K562 (cell line): ENCODE measurements at regions of chr1 and their contacts with region 1.

Region 1: DNA sequence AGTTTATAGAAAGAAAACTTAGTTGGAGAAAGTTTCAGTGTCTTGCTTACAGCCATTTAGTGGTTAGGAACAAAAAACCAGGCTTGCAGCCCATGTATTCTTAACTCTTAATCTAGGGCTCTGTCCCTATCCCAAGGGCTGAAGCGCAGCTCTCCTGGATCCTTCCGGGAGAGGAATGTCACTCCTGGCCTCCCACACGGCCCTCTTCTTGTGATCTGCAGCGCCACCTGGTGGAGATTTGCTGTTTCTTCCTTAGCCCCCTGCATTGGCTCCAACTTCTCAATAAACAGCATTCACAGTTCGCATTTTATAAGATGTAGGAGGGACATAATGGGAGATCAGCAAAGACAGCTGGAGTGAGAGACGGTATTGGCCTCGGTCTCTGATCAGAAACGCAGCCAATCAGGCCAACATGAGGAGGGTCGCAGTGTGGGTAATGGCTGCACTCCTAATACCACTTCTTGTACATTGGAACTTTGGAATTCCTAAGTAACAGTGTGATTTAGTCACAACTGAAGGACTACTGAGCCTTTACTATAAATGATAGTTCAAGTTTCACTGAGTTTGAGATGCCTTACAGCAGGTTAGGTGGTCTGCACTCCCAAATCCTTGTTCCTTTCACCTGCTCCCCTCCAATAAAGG is 283.4 kb downstream of the ASTN1 start:
- DNase-seq: peak; percentile 81 to 92 (median 91)
- ATAC-seq: peak; percentile 67
- H3K4me3 ChIP-seq: no peak overlapping the region
- H3K27ac ChIP-seq: peak overlapping the region; percentile 88
- H3K4me1 ChIP-seq: peaks cover 33 to 50% of the 10 kb centered on the region in 2 experiments
- H3K27me3 ChIP-seq: no peaks in the 10 kb centered on the region
- CTCF ChIP-seq: peak; percentile 86 to 96 (median 95)
- EP300 ChIP-seq: peak; percentile 25; the same call in 1 of the 2 replicates
- POLR2A ChIP-seq: no peak
- RAD21 ChIP-seq: peak; percentile 96 to 97

Region 2: GRCh38 chr1:176691251-176692228 is 189.5 kb before region 1 on chr1:
- CTCF ChIA-PET with region 1: interaction called, 3 read pairs
- POLR2A ChIA-PET with region 1: no interaction called
- in situ Hi-C with region 1: no loop called
- intact Hi-C with region 1: loop called (anchors 2 kb)
- DNase-seq: peak; percentile 35 to 76 (median 49)
- ATAC-seq: peak; percentile 91
- H3K4me3 ChIP-seq: no peak overlapping the region
- H3K27ac ChIP-seq: no peak overlapping the region
- H3K4me1 ChIP-seq: no peaks in the 10 kb centered on the region; a peak in 1 of 5 replicates
- H3K27me3 ChIP-seq: 0 out of 5 replicates have a peak, but pooled peaks cover 0 to 3% of the 10 kb centered on the region in 2 experiments
- CTCF ChIP-seq: peak; percentile 76 to 80 (median 80)
- EP300 ChIP-seq: no peak
- POLR2A ChIP-seq: no peak
- RAD21 ChIP-seq: peak; percentile 77 to 78

Region 3: DNA sequence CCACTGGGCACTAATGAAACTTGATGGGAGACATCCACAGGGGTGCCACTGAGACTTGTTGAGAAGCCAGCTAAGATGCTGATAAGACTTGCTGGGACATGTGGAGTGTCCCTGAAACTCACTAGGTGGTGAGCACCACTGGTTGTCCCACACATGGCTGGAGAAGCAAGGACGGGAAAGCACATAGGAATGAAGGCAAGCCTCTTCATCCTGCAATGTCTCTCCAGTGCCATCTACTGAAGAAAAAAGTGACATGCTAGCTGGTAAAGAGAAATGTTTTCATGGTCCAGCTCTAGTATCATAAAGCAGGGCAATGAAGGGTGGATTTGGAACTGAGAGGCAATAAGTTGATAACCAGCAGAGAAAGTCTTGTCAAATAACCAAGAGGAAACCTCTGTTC is 135.1 kb before region 1 on chr1:
- CTCF ChIA-PET with region 1: interaction called, 4 read pairs
- POLR2A ChIA-PET with region 1: no interaction called
- in situ Hi-C with region 1: no loop called
- intact Hi-C with region 1: loop called (anchors 1 kb)
- DNase-seq: peak in 1 of 4 experiments; percentile 21
- ATAC-seq: peak; percentile 77; the same call in 2 of the 3 replicates
- H3K4me3 ChIP-seq: no peak overlapping the region
- H3K27ac ChIP-seq: no peak overlapping the region
- H3K4me1 ChIP-seq: no peaks in the 10 kb centered on the region
- H3K27me3 ChIP-seq: peaks cover 0 to 3% of the 10 kb centered on the region in 2 experiments; a peak in 2 of 5 replicates
- CTCF ChIP-seq: peak; percentile 35 to 56 (median 53); a peak in 5 of 6 replicates
- EP300 ChIP-seq: no peak
- POLR2A ChIP-seq: no peak
- RAD21 ChIP-seq: peak; percentile 8 to 71; a peak in 3 of 4 replicates

Region 4: DNA sequence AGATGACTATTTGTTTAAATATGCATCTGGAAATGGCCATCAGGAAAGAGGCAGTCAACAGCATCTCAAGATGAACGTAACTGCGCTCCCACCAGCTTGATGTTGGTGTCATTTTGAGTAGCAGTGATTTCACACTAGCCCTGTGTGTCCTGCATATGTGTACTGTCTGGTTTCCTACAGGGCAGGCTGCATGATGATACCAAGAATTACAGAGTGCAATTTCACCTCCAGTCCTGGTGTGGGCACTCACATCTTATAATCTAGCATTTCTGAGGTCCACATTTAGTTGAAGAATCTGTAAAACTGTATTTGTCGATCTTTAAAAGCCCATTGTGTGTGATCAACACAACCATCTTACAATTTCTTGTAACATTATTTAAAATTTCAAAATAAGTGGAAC is 81.8 kb before region 1 on chr1:
- CTCF ChIA-PET with region 1: no interaction called
- POLR2A ChIA-PET with region 1: no interaction called
- in situ Hi-C with region 1: no loop called
- intact Hi-C with region 1: loop called (anchors 1 kb)
- DNase-seq: peak in 2 of 4 experiments; percentile 3 to 17
- ATAC-seq: peak; percentile 81
- H3K4me3 ChIP-seq: no peak overlapping the region
- H3K27ac ChIP-seq: no peak overlapping the region
- H3K4me1 ChIP-seq: no peaks in the 10 kb centered on the region
- H3K27me3 ChIP-seq: peaks cover 0 to 7% of the 10 kb centered on the region in 2 experiments; a peak in 1 of 5 replicates
- CTCF ChIP-seq: peak; percentile 10 to 42 (median 29); a peak in 3 of 6 replicates
- EP300 ChIP-seq: no peak
- POLR2A ChIP-seq: no peak
- RAD21 ChIP-seq: peak in 1 of 2 experiments; percentile 43; a peak in 2 of 4 replicates

Region 5: DNA sequence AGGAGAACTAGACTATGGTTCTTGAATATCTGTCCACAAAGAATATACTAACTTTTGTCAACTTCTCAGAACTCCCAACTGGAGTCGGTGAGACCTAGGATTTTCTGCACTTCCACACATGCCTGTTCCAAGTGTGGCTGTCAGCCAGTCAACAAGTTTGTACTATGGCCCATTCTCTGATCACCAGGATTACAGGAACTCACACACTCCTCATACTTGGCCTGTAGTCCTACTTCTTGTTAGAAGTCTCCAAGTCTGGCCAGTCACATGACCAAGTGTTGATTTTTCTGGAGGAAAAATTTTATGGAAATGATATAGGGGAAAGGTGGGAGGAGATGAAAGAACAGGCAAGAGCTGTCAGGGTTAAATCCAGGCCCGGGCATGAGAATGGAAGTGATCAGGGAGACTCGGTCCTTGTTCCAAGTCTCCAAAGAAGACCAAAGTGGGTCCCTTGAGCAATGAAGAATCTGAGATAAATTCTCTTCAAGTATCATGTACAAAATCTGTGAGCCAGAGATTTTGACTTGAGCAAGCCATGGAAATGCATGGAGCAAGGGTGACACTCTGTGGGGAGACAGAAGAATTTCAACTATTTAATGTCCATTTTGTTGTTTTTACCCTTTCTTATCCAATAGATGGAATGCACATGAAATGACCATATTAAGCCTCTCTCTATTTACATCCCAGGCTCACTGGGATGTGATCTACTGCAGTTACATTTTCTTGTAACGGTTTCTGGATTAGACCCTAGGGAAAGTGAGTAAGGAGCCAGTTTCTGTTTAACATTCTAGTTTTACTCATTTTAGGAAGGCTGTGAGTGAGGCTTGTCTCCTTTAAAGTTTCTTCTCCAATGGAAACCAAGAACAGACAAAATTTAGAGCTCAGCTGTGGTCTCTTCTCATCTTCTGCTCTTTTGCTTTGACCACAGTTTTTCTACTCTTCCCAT is 37.5 kb before region 1 on chr1:
- CTCF ChIA-PET with region 1: no interaction called
- POLR2A ChIA-PET with region 1: interaction called, 3 read pairs
- in situ Hi-C with region 1: no loop called
- intact Hi-C with region 1: loop called (anchors 1 kb)
- DNase-seq: peak; percentile 19 to 67 (median 34)
- ATAC-seq: peak; percentile 71
- H3K4me3 ChIP-seq: no peak overlapping the region
- H3K27ac ChIP-seq: no peak overlapping the region
- H3K4me1 ChIP-seq: peaks cover 0 to 10% of the 10 kb centered on the region in 2 experiments; a peak in 3 of 5 replicates
- H3K27me3 ChIP-seq: peaks cover 4 to 6% of the 10 kb centered on the region in 2 experiments; a peak in 3 of 5 replicates
- CTCF ChIP-seq: peak; percentile 54 to 87 (median 62); a peak in 5 of 6 replicates
- EP300 ChIP-seq: no peak
- POLR2A ChIP-seq: no peak
- RAD21 ChIP-seq: peak; percentile 94 to 95

Region 6: DNA sequence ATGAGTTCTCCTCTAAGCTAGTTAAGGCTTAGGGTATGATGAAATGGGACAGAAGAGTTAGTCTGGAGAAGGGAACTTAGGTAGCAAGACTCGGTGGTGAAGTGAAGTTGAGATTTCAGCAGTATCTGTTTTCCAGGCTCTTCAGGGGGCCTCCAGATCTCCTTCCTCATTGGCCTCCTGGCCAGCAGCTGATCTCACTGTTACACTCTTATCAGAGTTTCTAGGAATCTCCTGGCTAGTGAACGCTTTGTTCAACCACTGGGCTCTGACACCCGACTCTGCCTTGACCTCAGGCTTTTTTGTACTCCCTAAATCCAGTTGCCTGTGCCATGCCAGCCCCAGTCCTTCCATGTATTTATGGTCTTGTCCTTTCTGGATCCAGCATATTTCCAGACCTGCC is 27.6 kb before region 1 on chr1:
- CTCF ChIA-PET with region 1: no interaction called
- POLR2A ChIA-PET with region 1: interaction called, 3 read pairs
- in situ Hi-C with region 1: no loop called
- intact Hi-C with region 1: loop called (anchors 1 kb)
- DNase-seq: peak; percentile 35 to 83 (median 57)
- ATAC-seq: peak; percentile 88
- H3K4me3 ChIP-seq: no peak overlapping the region
- H3K27ac ChIP-seq: no peak overlapping the region
- H3K4me1 ChIP-seq: peaks cover 12 to 43% of the 10 kb centered on the region in 2 experiments
- H3K27me3 ChIP-seq: no peaks in the 10 kb centered on the region
- CTCF ChIP-seq: no peak
- EP300 ChIP-seq: peak; percentile 59; the same call in 1 of the 2 replicates
- POLR2A ChIP-seq: no peak
- RAD21 ChIP-seq: no peak